PC-3 (cell line): ENCODE measurements at regions of chr20 and their contacts with region 1.

Region 1: DNA sequence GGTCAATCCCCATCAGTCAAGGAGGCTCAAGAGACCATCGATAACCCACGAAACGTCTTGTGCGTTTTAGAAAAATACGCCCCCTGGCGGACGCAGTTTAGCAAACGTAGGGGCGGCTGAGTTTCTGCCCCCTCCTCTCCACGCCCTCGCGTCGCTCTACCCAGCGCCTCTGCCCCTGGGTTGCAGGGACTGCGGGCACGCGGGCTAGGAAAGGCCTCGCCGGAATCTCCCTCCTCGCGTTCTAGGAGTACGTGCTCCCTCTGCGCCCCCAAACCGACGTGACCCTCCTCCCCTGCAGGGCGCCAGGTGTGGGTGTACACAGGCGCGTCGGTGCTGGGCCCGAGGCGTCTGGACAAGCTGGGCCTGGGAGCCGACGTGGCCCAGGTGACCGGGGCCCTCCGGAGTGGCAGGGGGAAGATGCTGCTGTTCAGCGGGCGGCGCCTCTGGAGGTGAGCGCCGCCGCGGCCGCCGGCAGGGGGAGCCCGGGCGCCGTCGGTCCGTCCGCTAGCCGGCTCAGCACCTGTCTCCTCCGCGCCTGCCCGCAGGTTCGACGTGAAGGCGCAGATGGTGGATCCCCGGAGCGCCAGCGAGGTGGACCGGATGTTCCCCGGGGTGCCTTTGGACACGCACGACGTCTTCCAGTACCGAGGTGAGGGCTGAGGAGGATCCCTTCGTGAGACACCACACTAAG is 5.3 kb downstream of the MMP9 start:
- DNase-seq: peak; percentile 82
- ATAC-seq: peak; percentile 95
- H3K4me3 ChIP-seq: peak overlapping the region; percentile 63
- H3K27ac ChIP-seq: no peak overlapping the region
- H3K4me1 ChIP-seq: peaks cover 6% of the 10 kb centered on the region; the same call in 1 of the 2 replicates
- H3K27me3 ChIP-seq: peaks cover 12% of the 10 kb centered on the region; the same call in 1 of the 2 replicates
- CTCF ChIP-seq: peak; percentile 93

Region 2: GRCh38 chr20:45987108-45987780 is 26.7 kb before region 1 on chr20:
- CTCF ChIA-PET with region 1: interaction called, 17 read pairs
- POLR2A ChIA-PET with region 1: no interaction called
- intact Hi-C with region 1: loop called (anchors 1 kb)
- DNase-seq: peak; percentile 87
- ATAC-seq: peak; percentile 99
- H3K4me3 ChIP-seq: no peak overlapping the region
- H3K27ac ChIP-seq: no peak overlapping the region
- H3K4me1 ChIP-seq: peaks cover 8% of the 10 kb centered on the region
- H3K27me3 ChIP-seq: no peaks in the 10 kb centered on the region
- CTCF ChIP-seq: peak; percentile 98

Region 3: DNA sequence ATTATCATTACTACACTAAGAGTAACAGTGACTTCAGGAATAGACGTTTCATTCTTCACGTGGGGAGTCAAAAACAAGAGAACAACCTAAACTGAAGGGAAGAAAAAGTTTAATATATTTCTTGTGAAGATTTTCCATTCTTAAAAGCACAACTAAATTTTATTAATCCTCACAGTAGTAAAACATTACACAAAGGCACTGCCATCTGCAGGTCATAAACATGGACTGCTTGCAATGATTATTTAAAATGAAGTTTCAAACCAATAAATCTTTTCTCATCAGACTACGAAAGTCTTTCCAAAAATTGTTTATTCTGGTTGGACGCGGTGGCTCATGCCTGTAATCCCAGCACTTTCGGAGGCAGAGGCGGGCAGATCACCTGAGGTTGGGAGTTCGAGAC is 73.2 kb after region 1 on chr20:
- CTCF ChIA-PET with region 1: no interaction called
- POLR2A ChIA-PET with region 1: no interaction called
- intact Hi-C with region 1: loop called (anchors 2 kb)
- DNase-seq: peak; percentile 41
- ATAC-seq: no peak
- H3K4me3 ChIP-seq: peak overlapping the region; percentile 44; the same call in 1 of the 2 replicates
- H3K27ac ChIP-seq: no peak overlapping the region
- H3K4me1 ChIP-seq: peaks cover 38% of the 10 kb centered on the region
- H3K27me3 ChIP-seq: no peaks in the 10 kb centered on the region
- CTCF ChIP-seq: peak; percentile 67